AG04449 (cell line): ENCODE measurements at regions of chr2 and their contacts with region 1.

Region 1: DNA sequence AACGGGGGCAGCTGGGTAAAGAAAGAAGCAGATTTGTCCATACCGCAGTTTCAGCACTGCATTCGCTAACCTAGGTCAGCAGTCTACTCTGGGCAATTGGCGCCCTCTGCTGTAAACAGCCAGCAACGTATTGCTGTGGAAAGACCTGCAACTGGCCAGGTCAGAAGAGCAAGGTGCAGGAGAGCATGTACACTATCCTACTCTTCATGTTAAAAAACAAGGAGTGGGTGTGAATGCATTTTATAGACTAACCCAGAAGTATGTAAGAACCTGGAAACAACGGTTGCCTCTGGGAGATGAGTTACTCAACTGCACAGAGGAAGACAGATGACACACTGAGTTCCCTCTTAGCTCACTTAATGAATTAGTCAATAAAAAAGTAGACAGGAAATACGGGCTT is 6.2 kb downstream of the MRPS5 start:
- DNase-seq: no peak
- H3K4me3 ChIP-seq: no peak overlapping the region
- CTCF ChIP-seq: peak; percentile 86

Region 2: GRCh38 chr2:94947097-94948016 is 168.1 kb before region 1 on chr2:
- CTCF ChIA-PET with region 1: no interaction called
- POLR2A ChIA-PET with region 1: no interaction called
- DNase-seq: no peak
- H3K4me3 ChIP-seq: no peak overlapping the region
- CTCF ChIP-seq: no peak

Region 3: DNA sequence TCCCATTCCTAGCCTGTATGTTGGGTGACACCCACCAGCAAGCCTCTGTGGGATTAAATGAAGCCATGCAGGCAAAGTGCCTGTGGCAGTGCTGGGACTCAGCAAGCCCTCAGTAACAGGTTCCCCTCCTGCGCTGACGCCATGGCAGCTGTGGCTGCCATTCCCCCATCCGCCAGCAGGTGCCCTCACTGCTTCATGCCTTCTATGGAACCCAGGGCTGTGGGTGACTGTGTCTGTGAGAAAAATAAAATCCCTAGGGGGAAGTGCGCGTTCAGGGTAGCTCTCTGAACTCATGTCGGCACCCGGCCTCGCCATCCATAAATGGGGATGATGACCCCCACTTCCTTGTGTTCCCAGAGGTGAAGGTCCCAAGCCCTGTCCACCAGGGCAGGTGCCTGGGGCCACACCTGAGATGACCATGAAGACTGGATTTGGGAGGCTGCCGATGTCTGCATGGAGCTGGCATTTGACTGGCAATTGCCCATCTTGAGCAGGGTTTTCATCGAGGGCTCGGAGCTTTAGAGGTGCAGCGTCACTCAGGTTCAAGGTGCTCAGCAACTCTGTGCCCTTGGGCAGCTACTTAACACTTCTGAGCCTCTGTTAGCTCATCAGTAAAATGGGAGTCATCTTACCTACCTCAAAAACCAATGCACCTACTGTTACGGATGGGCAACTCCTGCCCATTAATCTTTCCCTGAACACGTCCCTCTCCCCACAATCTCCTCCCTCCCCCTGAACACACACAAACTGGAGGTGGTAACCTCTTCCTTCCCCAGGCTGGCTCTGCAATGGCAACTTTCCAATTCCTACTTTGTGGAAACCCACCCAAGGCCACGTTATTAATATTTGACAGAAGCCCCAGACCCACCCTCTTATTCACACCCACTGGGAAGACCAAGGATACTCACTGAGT is 92.9 kb before region 1 on chr2:
- CTCF ChIA-PET with region 1: interaction called, 21 read pairs
- POLR2A ChIA-PET with region 1: no interaction called
- DNase-seq: no peak
- H3K4me3 ChIP-seq: no peak overlapping the region
- CTCF ChIP-seq: peak; percentile 89

Region 4: DNA sequence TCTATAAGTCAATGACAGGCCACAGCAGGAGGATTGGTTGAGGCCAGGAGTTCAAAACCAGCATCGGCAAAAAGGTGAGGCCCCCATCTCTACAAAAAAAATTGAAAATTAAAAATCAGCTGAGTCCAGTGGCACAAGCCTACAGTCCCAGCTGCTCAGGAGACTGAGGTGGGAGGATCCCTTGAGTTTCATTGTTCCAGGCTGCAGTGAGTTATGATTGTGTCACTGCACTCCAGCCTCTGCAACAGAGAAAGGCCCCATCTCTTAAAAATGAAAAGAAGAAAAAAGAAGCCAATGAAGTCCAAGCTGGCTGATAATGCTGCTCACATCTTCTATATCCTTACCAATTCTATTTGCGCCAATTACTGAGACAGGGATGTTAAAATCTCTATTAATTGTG is 32.9 kb before region 1 on chr2:
- CTCF ChIA-PET with region 1: interaction called, 10 read pairs
- POLR2A ChIA-PET with region 1: no interaction called
- DNase-seq: no peak
- H3K4me3 ChIP-seq: no peak overlapping the region
- CTCF ChIP-seq: no peak